ENCODE measurements at regions of chr11 and their contacts with region 1.

Region 1: DNA sequence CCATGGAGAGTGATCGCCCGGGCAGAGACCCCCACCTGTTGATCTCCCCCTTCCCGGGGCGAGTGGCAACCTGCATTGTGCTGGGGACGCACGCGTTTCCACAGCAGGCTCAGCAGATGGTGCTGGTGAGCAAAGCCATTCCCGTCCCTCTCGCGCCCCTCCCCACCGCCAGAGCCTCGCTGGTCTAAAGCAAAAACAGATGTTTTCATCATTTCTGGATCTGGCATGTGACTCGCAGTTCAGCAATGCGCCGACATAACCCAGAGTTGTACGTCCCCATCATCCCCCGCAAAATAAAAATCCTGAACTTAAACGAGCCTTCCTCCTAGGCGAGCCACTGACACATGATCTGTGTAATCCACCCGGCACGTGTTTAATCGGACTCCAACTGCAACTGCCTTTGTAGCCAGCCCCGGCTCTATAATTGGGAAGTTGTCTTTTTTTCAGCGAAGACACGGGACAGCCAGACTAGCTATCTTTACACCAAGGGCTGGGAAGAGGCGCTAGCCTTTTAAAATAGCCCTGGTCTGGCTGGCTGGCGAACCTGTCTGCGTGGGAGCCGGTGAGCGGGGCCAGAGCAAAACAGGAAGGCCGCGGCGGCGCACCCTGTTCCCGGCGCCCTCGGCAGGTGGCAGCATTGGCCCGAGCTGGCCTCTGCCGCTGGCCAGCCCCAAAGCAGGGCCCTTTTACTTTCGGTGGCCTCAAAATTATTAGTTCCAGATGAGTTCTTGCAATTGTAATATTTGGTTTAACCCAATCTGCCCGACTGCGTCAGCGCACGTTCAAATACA is 203.0 kb upstream of the SORL1-AS1 start:
- DNase-seq: peak; percentile 91 to 96 (median 92)
- H3K4me3 ChIP-seq: peak overlapping the region; percentile 33
- H3K27ac ChIP-seq: peak overlapping the region; percentile 90 to 91
- H3K4me1 ChIP-seq: peaks cover 11% of the 10 kb centered on the region
- H3K27me3 ChIP-seq: no peaks in the 10 kb centered on the region
- CTCF ChIP-seq: peak; percentile 92 to 95 (median 95)
- EP300 ChIP-seq: peak; percentile 52
- POLR2A ChIP-seq: peak; percentile 10

Region 2: GRCh38 chr11:121119440-121119839 is 536.3 kb before region 1 on chr11:
- intact Hi-C with region 1: no loop called
- DNase-seq: no peak
- H3K4me3 ChIP-seq: no peak overlapping the region
- H3K27ac ChIP-seq: no peak overlapping the region
- H3K4me1 ChIP-seq: no peaks in the 10 kb centered on the region
- H3K27me3 ChIP-seq: no peaks in the 10 kb centered on the region
- CTCF ChIP-seq: no peak
- EP300 ChIP-seq: no peak
- POLR2A ChIP-seq: no peak

Region 3: DNA sequence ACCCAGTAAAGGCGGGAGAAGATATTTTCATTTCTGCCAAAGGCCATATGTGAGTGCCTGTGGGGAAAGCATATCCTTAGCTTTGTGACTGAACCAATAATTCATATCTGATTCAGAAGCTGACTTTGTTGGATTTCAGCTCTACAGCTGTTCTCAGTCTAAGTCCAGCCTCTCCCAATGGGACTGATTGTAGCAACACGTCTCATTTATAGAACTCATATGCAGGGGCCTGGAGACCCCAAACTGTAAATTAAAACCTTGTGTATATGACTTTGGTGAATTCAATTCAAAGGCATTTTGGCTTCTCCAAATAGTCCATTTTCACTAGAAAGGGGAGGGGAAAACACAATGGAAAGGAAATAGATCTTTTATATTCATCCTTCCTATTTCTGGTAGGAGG is 47.5 kb after region 1 on chr11:
- intact Hi-C with region 1: no loop called
- DNase-seq: no peak
- H3K4me3 ChIP-seq: no peak overlapping the region
- H3K27ac ChIP-seq: no peak overlapping the region
- H3K4me1 ChIP-seq: no peaks in the 10 kb centered on the region
- H3K27me3 ChIP-seq: no peaks in the 10 kb centered on the region
- CTCF ChIP-seq: no peak
- EP300 ChIP-seq: no peak
- POLR2A ChIP-seq: no peak

Region 4: GRCh38 chr11:121722431-121723245 is 66.9 kb after region 1 on chr11:
- intact Hi-C with region 1: loop called in 1 of 4 experiments (anchors 2 kb)
- DNase-seq: peak; percentile 90 to 94 (median 93)
- H3K4me3 ChIP-seq: peak overlapping the region; percentile 40
- H3K27ac ChIP-seq: peak overlapping the region; percentile 69 to 97
- H3K4me1 ChIP-seq: peaks cover 2% of the 10 kb centered on the region
- H3K27me3 ChIP-seq: no peaks in the 10 kb centered on the region
- CTCF ChIP-seq: peak in 2 of 3 donors; percentile 24 to 35
- EP300 ChIP-seq: peak; percentile 79
- POLR2A ChIP-seq: peak; percentile 75

Region 5: GRCh38 chr11:121741761-121742361 is 86.1 kb after region 1 on chr11:
- intact Hi-C with region 1: loop called in 1 of 4 experiments (anchors 5 kb)
- DNase-seq: peak; percentile 77 to 89 (median 88)
- H3K4me3 ChIP-seq: peak overlapping the region; percentile 12
- H3K27ac ChIP-seq: peak overlapping the region; percentile 24 to 86
- H3K4me1 ChIP-seq: peaks cover 7% of the 10 kb centered on the region
- H3K27me3 ChIP-seq: no peaks in the 10 kb centered on the region
- CTCF ChIP-seq: no peak
- EP300 ChIP-seq: peak; percentile 86
- POLR2A ChIP-seq: peak; percentile 34

Region 6: GRCh38 chr11:122101625-122102291 is 446.0 kb after region 1 on chr11:
- intact Hi-C with region 1: loop called (anchors 1 to 5 kb)
- DNase-seq: peak; percentile 75 to 82 (median 77)
- H3K4me3 ChIP-seq: peak overlapping the region; percentile 58
- H3K27ac ChIP-seq: peak overlapping the region; percentile 30 to 93
- H3K4me1 ChIP-seq: no peaks in the 10 kb centered on the region
- H3K27me3 ChIP-seq: no peaks in the 10 kb centered on the region
- CTCF ChIP-seq: peak; percentile 55 to 66 (median 57)
- EP300 ChIP-seq: no peak
- POLR2A ChIP-seq: no peak

Region 7: GRCh38 chr11:122209619-122210366 is 554.1 kb after region 1 on chr11:
- intact Hi-C with region 1: loop called in 3 of 4 experiments (anchors 5 kb)
- DNase-seq: peak; percentile 70 to 90 (median 88)
- H3K4me3 ChIP-seq: no peak overlapping the region
- H3K27ac ChIP-seq: peak overlapping the region in 1 of 2 donors; percentile 85
- H3K4me1 ChIP-seq: peaks cover 11% of the 10 kb centered on the region
- H3K27me3 ChIP-seq: no peaks in the 10 kb centered on the region
- CTCF ChIP-seq: no peak
- EP300 ChIP-seq: no peak
- POLR2A ChIP-seq: no peak

Region 8: GRCh38 chr11:122505304-122506006 is 849.7 kb after region 1 on chr11:
- intact Hi-C with region 1: loop called (anchors 2 to 5 kb)
- DNase-seq: peak; percentile 83 to 88 (median 85)
- H3K4me3 ChIP-seq: no peak overlapping the region
- H3K27ac ChIP-seq: no peak overlapping the region
- H3K4me1 ChIP-seq: peaks cover 4% of the 10 kb centered on the region
- H3K27me3 ChIP-seq: no peaks in the 10 kb centered on the region
- CTCF ChIP-seq: peak; percentile 60 to 84 (median 73)
- EP300 ChIP-seq: no peak
- POLR2A ChIP-seq: no peak

Measured in ovary (tissue), 10 donors.